PC-9 (cell line): ENCODE measurements at regions of chr3 and their contacts with region 1.

Region 1: GRCh38 chr3:61561374-61562041 is at the start of gene PTPRG:
- DNase-seq: peak; percentile 64 to 83
- H3K4me3 ChIP-seq: peak within 1 kb of the TSS; percentile 74
- H3K27ac ChIP-seq: 0 out of 2 replicates have a peak within 1 kb of the TSS, but pooled peaks have one; percentile 1
- H3K4me1 ChIP-seq: no peaks in the 10 kb centered on the region
- H3K27me3 ChIP-seq: no peaks in the 10 kb centered on the region
- CTCF ChIP-seq: no peak
- total RNA-seq, gene PTPRG: 22.0 and 32.9 TPM in 2 replicates

Region 2: GRCh38 chr3:60948484-60948883 is 613.0 kb before region 1 on chr3:
- CTCF ChIA-PET with region 1: no interaction called
- POLR2A ChIA-PET with region 1: no interaction called
- intact Hi-C with region 1: no loop called
- DNase-seq: no peak
- H3K4me3 ChIP-seq: no peak overlapping the region
- H3K27ac ChIP-seq: no peak overlapping the region
- H3K4me1 ChIP-seq: no peaks in the 10 kb centered on the region
- H3K27me3 ChIP-seq: no peaks in the 10 kb centered on the region
- CTCF ChIP-seq: 0 out of 2 replicates have a peak, but pooled peaks have one; percentile 27

Region 3: GRCh38 chr3:61060411-61060861 is 501.1 kb before region 1 on chr3:
- CTCF ChIA-PET with region 1: no interaction called
- POLR2A ChIA-PET with region 1: interaction called, 19 read pairs
- intact Hi-C with region 1: no loop called
- DNase-seq: no peak
- H3K4me3 ChIP-seq: no peak overlapping the region
- H3K27ac ChIP-seq: no peak overlapping the region
- H3K4me1 ChIP-seq: no peaks in the 10 kb centered on the region
- H3K27me3 ChIP-seq: no peaks in the 10 kb centered on the region
- CTCF ChIP-seq: no peak

Region 4: DNA sequence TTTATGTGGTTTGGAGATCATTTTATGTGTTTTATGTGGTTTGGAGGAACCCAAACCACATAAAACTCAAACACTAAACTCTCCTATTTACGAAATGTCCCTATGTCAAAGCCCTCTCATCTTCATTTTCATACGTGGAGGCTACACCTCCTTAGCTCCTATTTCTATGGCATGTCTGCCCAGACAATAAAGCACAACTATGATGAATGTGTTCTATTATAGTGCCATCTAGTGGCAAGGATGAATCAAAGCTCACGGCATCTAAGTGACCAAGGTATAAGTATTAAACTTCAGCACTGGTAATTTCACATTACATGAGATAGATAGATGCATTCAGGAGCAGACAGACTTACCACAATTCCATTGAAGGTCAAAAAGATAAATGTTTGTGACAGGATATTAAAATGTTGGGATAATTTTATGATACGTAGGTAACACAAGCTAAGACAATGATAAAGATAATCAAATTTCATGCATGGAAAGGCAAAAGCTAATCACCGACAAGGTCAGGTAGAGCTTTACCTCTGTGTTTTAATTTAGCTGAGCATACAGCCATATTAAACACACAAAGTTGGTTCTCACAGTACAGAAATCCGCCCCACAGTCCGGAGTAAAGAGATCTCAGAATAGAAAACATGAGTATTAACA is 179.6 kb before region 1 on chr3:
- CTCF ChIA-PET with region 1: no interaction called
- POLR2A ChIA-PET with region 1: no interaction called
- intact Hi-C with region 1: no loop called
- DNase-seq: peak in 1 of 2 experiments; percentile 39
- H3K4me3 ChIP-seq: no peak overlapping the region
- H3K27ac ChIP-seq: no peak overlapping the region
- H3K4me1 ChIP-seq: no peaks in the 10 kb centered on the region
- H3K27me3 ChIP-seq: no peaks in the 10 kb centered on the region
- CTCF ChIP-seq: peak; percentile 69

Region 5: DNA sequence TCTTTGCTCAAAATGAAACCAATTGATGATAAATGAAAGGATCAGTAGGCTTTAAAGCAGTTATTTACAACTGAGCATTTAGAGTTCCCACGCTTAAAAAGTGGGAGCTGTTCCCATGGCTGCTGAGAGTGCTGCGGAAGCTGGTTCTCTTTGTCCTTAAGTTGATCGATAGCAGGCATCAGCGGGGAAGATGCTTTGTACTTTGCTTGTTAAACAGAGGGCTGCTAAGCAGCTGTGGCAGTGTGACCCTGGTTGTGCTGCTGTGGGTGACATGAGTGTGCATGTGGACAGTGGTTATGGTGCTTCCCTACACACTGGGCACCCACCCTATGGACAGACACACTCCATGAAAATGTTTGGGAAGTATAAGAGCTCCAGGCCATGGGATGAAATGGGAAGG is 96.2 kb after region 1 on chr3:
- CTCF ChIA-PET with region 1: interaction called, 4 read pairs
- POLR2A ChIA-PET with region 1: no interaction called
- intact Hi-C with region 1: loop called (anchors 5 kb)
- DNase-seq: no peak
- H3K4me3 ChIP-seq: no peak overlapping the region
- H3K27ac ChIP-seq: no peak overlapping the region
- H3K4me1 ChIP-seq: no peaks in the 10 kb centered on the region
- H3K27me3 ChIP-seq: no peaks in the 10 kb centered on the region
- CTCF ChIP-seq: no peak

Region 6: GRCh38 chr3:61858056-61858455 is 296.5 kb after region 1 on chr3:
- CTCF ChIA-PET with region 1: interaction called, 4 read pairs
- POLR2A ChIA-PET with region 1: no interaction called
- intact Hi-C with region 1: loop called (anchors 2 kb)
- DNase-seq: no peak
- H3K4me3 ChIP-seq: no peak overlapping the region
- H3K27ac ChIP-seq: no peak overlapping the region
- H3K4me1 ChIP-seq: 0 out of 2 replicates have a peak, but pooled peaks cover under 1% of the 10 kb centered on the region
- H3K27me3 ChIP-seq: no peaks in the 10 kb centered on the region
- CTCF ChIP-seq: peak; percentile 49

Region 7: DNA sequence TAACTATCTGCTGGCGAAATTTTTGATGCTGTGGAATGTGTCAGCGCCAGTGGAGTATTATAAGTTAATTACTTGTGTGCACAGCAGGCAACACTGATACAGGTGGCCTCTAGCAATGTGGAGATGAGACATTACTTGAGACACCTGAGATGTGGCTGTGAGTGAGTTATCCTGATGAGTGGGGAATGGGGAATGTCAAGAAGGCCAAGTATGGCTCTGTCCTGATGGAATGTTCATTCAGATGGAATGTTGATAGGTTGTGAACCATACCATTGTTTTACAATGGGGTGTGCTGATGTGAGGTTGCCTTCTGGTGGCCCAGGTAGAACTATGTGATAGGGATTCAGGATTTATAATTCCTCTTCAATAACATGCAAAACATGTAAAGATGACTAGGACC is 404.7 kb after region 1 on chr3:
- CTCF ChIA-PET with region 1: no interaction called
- POLR2A ChIA-PET with region 1: no interaction called
- intact Hi-C with region 1: loop called (anchors 2 kb)
- DNase-seq: peak; percentile 53 to 76
- H3K4me3 ChIP-seq: no peak overlapping the region
- H3K27ac ChIP-seq: no peak overlapping the region
- H3K4me1 ChIP-seq: no peaks in the 10 kb centered on the region
- H3K27me3 ChIP-seq: no peaks in the 10 kb centered on the region
- CTCF ChIP-seq: no peak

Region 8: GRCh38 chr3:62131592-62131991 is 570.1 kb after region 1 on chr3:
- CTCF ChIA-PET with region 1: no interaction called
- POLR2A ChIA-PET with region 1: no interaction called
- intact Hi-C with region 1: loop called (anchors 5 kb)
- DNase-seq: no peak
- H3K4me3 ChIP-seq: no peak overlapping the region
- H3K27ac ChIP-seq: no peak overlapping the region
- H3K4me1 ChIP-seq: peaks cover 10% of the 10 kb centered on the region; the same call in 1 of the 2 replicates
- H3K27me3 ChIP-seq: no peaks in the 10 kb centered on the region
- CTCF ChIP-seq: peak; percentile 37; the same call in 1 of the 2 replicates